K562 (cell line): ENCODE measurements at regions of chr11 and their contacts with region 1.

Region 1: DNA sequence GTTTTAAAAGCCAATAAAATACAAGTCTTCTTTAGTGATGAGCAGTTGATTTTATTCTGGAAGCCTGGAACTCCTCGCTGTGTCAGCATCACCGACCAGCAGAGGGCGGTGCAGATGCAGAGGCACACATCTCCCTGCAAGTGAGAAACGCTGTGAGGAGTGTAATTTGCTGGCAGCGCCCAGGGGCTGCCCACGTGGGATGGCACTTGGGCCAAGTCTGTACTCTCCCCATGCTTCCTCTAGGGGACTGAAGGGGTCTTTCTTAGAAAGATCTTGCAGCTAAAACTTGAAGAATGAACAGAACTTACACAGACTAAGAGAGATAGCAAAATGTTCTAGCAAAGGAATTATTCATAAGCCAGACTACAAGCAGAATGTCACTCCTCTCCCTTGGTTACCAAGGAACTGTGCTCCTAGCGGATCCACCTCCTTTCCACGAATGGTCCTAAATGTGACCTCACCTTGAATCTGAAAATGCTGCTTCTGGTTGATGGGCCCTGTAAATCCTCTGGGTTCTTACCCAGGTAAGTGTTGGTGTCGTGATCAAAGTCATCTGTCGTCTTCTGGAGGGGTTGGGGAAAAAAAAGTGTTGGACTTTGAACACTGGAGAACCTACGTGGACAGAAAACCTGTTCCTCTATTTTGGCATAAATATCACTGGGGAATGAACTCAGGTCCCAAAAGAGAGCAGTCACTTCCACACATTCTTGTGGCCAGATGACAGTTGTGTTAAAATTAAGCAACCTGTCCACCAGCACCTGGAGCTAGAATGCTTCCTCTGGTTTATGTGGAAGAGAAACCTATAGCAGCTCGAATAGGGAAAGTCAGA is 31.8 kb downstream of the CNTF start:
- DNase-seq: peak; percentile 57 to 81 (median 60)
- ATAC-seq: peak; percentile 97
- H3K4me3 ChIP-seq: no peak overlapping the region
- H3K27ac ChIP-seq: no peak overlapping the region
- H3K4me1 ChIP-seq: no peaks in the 10 kb centered on the region
- H3K27me3 ChIP-seq: no peaks in the 10 kb centered on the region
- CTCF ChIP-seq: peak; percentile 83 to 93 (median 92)
- EP300 ChIP-seq: no peak
- POLR2A ChIP-seq: no peak
- RAD21 ChIP-seq: peak; percentile 86 to 95

Region 2: DNA sequence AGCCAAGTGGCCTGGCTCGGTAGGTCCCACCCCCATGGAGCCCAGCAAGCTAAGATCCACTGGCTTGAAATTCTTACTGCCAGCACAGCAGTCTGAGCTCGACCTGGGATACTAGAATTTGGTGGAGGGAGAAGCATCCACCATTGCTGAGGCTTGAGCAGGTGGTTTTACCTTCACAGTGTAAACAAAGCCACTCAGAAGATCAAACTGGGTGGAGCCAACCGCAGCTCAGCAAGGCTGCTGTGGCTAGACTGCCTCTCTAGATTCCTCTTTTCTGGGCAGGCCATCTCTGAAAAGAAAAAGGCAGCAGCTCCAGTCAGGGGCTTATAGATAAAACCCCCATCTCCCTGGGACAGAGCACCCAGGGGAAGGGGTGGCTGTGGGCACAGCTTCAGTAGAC is 124.1 kb before region 1 on chr11:
- CTCF ChIA-PET with region 1: no interaction called
- POLR2A ChIA-PET with region 1: no interaction called
- in situ Hi-C with region 1: no loop called
- intact Hi-C with region 1: no loop called
- DNase-seq: no peak
- ATAC-seq: no peak
- H3K4me3 ChIP-seq: no peak overlapping the region
- H3K27ac ChIP-seq: no peak overlapping the region
- H3K4me1 ChIP-seq: no peaks in the 10 kb centered on the region; a peak in 1 of 5 replicates
- H3K27me3 ChIP-seq: peaks cover 0 to 5% of the 10 kb centered on the region in 2 experiments; a peak in 1 of 5 replicates
- CTCF ChIP-seq: no peak
- EP300 ChIP-seq: no peak
- POLR2A ChIP-seq: no peak
- RAD21 ChIP-seq: no peak

Region 3: GRCh38 chr11:58616594-58616993 is 37.7 kb before region 1 on chr11:
- CTCF ChIA-PET with region 1: no interaction called
- POLR2A ChIA-PET with region 1: no interaction called
- in situ Hi-C with region 1: no loop called
- intact Hi-C with region 1: no loop called
- DNase-seq: no peak
- ATAC-seq: no peak
- H3K4me3 ChIP-seq: no peak overlapping the region
- H3K27ac ChIP-seq: no peak overlapping the region
- H3K4me1 ChIP-seq: no peaks in the 10 kb centered on the region
- H3K27me3 ChIP-seq: no peaks in the 10 kb centered on the region
- CTCF ChIP-seq: no peak
- EP300 ChIP-seq: no peak
- POLR2A ChIP-seq: no peak
- RAD21 ChIP-seq: no peak

Region 4: DNA sequence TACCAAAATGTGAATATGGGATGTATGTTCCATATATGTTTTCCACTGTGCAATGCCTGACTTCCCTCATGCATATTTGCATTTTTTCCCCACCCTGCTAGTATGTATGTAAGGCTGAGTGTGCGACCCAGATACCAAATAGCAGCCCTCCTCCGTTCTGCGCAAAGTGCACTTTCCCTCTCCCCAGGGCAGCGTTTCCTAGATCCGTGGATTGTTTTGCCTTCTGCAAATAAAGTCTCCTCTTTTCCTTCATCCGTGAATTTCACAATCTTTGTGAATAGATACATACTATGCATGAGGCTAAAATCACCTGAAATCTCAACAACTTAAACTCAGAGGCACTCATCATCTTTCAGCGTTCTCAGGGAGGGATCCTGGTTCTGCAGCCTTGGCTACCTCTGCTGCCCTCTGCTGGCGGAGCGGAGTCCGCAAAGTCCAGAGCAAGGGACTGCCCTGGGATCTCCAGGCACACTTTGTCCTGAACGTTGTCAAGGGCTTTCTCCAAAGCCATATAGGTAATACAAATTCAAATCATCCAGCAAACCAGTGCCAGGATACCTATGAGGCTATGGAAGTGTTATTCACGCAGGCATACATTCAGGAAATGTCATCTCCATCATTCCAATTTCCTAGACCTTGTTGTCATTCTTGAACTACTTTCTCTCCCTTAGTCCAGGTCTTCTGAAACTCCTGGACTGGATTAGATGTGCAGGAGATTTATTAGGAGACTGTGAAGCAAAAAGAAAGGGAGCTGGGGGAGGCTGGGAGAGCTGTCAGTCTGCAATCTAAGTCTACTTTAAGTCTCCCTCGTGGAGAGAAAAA is 21.3 kb after region 1 on chr11:
- CTCF ChIA-PET with region 1: no interaction called
- POLR2A ChIA-PET with region 1: no interaction called
- in situ Hi-C with region 1: no loop called
- intact Hi-C with region 1: loop called (anchors 2 kb)
- DNase-seq: peak; percentile 73 to 84 (median 78)
- ATAC-seq: peak; percentile 99
- H3K4me3 ChIP-seq: no peak overlapping the region
- H3K27ac ChIP-seq: no peak overlapping the region
- H3K4me1 ChIP-seq: no peaks in the 10 kb centered on the region; a peak in 1 of 5 replicates
- H3K27me3 ChIP-seq: peaks cover 0 to 11% of the 10 kb centered on the region in 2 experiments; a peak in 1 of 5 replicates
- CTCF ChIP-seq: peak; percentile 83 to 97 (median 86)
- EP300 ChIP-seq: no peak
- POLR2A ChIP-seq: no peak
- RAD21 ChIP-seq: peak; percentile 71 to 78

Region 5: GRCh38 chr11:58900479-58901420 is 246.5 kb after region 1 on chr11:
- CTCF ChIA-PET with region 1: no interaction called
- POLR2A ChIA-PET with region 1: no interaction called
- in situ Hi-C with region 1: no loop called
- intact Hi-C with region 1: loop called (anchors 2 kb)
- DNase-seq: peak; percentile 59 to 82 (median 72)
- ATAC-seq: peak; percentile 98
- H3K4me3 ChIP-seq: no peak overlapping the region
- H3K27ac ChIP-seq: no peak overlapping the region
- H3K4me1 ChIP-seq: peaks cover 0 to 5% of the 10 kb centered on the region in 2 experiments; a peak in 2 of 5 replicates
- H3K27me3 ChIP-seq: peaks cover 3 to 7% of the 10 kb centered on the region in 2 experiments; a peak in 2 of 5 replicates
- CTCF ChIP-seq: peak; percentile 73 to 88 (median 86)
- EP300 ChIP-seq: no peak
- POLR2A ChIP-seq: no peak
- RAD21 ChIP-seq: peak; percentile 87 to 89

Region 6: DNA sequence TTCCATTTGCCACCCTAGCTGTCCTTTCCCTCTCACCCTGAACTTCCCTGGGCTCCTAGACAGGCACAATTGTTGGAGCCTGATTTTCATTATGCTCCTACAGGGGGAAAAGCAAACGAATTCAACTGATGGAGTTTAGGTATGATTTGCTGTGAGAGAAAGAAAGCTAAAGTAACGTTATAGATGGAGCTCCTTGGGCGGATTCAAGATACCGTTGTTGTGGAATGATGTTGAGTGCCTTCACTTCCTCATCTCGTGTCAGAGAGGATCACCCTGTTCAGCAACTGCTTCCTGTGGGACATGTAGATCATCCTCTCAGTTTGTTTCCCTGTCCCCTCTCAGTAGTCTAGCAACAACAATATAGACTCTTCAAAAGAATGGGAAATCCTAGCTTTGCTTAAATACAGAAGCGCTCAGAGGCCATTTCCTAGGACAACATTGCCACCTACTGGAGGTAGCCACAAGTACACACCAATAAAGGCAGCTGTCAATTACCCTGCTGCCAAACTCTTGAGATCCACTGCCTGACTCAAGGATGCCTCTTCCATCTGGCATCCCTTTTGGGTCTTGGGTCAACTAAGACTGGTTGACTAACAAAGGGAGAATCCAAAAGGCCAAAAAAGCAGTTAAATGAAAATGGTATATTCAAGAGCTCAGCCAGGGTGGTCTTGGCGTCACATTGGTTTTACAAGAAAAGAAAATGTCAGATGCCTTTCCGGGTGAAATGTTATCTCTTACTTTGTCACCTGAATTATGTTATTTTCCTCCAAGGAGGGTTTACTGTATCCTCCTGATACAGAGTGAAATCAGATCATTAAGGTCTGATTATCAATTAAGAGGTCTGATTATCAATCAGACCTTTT is 504.1 kb after region 1 on chr11:
- CTCF ChIA-PET with region 1: no interaction called
- POLR2A ChIA-PET with region 1: no interaction called
- in situ Hi-C with region 1: no loop called
- intact Hi-C with region 1: loop called (anchors 5 kb)
- DNase-seq: peak; percentile 61 to 77 (median 68)
- ATAC-seq: peak; percentile 97
- H3K4me3 ChIP-seq: no peak overlapping the region
- H3K27ac ChIP-seq: no peak overlapping the region
- H3K4me1 ChIP-seq: no peaks in the 10 kb centered on the region
- H3K27me3 ChIP-seq: 0 out of 5 replicates have a peak, but pooled peaks cover 0 to 4% of the 10 kb centered on the region in 2 experiments
- CTCF ChIP-seq: peak; percentile 75 to 89 (median 83)
- EP300 ChIP-seq: no peak
- POLR2A ChIP-seq: no peak
- RAD21 ChIP-seq: peak; percentile 82 to 86